Activated CD4-positive, alpha-beta T cell treated with anti-CD3 and anti-CD28 coated beads, Interleukin-2, amount 10 ng/mL, durations not matched to agents 24 days and 14 days (primary cell): ENCODE measurements at regions of chr3 and their contacts with region 1.

Region 1: DNA sequence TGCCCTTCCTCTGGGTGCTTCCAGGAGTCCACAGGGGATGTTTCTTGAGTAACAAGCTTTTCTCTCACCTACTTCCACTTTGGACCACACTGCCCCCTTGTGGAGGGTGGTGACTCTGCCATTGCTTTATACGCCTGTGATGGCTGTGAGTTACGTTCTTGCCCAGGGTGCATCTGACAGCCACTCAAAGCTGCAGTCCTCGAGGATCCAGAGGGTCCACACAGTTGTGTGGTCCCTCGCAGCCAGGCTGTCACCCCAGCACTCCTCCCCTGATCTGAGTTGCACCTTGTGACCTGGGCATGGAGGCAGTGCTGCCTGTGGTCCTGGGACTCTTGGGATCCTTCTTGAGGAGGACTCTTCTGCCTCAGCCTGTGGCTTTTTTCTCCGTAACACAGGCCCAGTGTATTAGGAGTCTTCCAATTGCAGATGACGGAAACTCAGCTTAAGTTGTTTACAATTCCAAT is 23.4 kb downstream of the FOXL2 start:
- DNase-seq: peak; percentile 95
- H3K4me3 Mint-ChIP-seq: no peak overlapping the region
- H3K27ac Mint-ChIP-seq: no peak overlapping the region
- H3K4me1 Mint-ChIP-seq: peaks cover 5% of the 10 kb centered on the region
- H3K27me3 Mint-ChIP-seq: peaks cover 17% of the 10 kb centered on the region

Region 2: GRCh38 chr3:138417559-138417982 is 506.0 kb before region 1 on chr3:
- intact Hi-C with region 1: loop called (anchors 1 kb)
- DNase-seq: peak; percentile 88
- H3K4me3 Mint-ChIP-seq: no peak overlapping the region
- H3K27ac Mint-ChIP-seq: no peak overlapping the region
- H3K4me1 Mint-ChIP-seq: peaks cover 2% of the 10 kb centered on the region
- H3K27me3 Mint-ChIP-seq: peaks cover 11% of the 10 kb centered on the region

Region 3: DNA sequence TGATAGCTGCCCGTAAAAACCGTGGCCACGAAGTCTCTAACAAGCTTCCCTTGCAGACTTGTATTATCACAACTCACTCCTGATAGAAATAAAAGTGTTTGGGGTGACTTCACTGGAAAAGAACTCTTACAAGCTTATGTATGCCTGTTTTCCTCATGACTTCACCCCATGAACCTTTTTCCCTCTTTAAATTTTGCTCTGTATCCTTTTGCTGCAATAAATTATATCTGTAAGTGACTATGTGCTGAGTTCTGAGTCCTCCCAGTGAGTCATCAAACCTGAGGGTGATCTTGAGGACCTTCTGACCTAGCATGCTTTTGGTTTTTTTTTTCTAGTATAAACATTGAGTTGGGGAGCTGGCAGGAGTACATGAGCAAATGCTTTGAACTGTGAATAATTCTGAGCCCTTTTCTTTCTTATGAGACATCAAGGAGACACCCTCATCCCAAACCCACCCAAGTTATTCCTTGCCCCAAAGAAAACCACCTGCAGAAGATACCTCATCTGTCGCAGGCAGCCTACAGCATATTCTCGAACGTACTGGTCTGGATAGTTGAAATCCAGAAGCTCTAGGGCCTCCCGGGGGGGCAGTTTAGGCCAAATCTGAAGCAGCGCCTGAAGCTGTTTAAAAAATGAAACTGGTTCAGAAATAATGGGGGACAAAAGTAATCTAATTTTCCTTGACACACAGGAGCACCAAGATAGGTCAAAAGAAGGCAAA is 229.1 kb before region 1 on chr3:
- intact Hi-C with region 1: loop called (anchors 1 kb)
- DNase-seq: no peak
- H3K4me3 Mint-ChIP-seq: no peak overlapping the region
- H3K27ac Mint-ChIP-seq: no peak overlapping the region
- H3K4me1 Mint-ChIP-seq: no peaks in the 10 kb centered on the region
- H3K27me3 Mint-ChIP-seq: no peaks in the 10 kb centered on the region

Region 4: DNA sequence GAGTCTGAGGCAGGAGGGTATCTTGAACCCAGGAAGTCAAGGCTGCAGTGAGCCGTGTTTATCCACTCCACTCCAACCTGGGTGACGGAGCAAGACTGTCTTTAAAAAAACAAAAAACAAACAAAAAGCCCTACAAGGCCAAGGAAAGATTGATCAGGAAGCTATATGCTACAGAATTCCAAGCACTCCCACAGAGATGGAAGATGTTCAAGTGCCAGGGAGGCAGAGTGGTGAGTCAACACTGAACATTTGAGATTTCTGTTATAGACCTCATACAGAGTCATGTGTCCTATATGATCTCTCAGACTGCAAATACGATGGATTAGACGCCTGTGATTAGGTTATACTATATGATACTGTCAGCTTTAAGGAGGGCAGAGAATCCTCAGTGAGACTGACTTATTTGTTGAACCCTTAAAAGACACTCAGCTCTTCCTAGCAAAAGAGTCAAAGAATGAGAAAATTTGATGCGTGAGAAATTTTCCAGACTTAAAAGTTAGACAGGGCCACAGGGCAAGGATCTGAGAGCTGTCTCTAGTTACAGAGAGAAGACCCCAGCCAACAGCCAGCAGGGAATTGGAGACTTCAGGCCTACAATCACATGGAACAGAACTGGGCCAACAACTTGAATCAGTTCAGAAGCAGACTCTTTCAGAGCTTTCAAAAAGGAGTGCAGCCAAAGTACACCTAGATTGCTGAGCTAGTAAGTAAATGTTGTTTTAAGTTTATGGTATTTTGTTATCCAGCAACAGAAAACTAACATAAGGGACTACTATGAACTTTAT is 196.4 kb before region 1 on chr3:
- intact Hi-C with region 1: no loop called
- DNase-seq: no peak
- H3K4me3 Mint-ChIP-seq: no peak overlapping the region
- H3K27ac Mint-ChIP-seq: no peak overlapping the region
- H3K4me1 Mint-ChIP-seq: peaks cover 18% of the 10 kb centered on the region
- H3K27me3 Mint-ChIP-seq: no peaks in the 10 kb centered on the region

Region 5: GRCh38 chr3:138862924-138863775 is 60.4 kb before region 1 on chr3:
- intact Hi-C with region 1: no loop called
- DNase-seq: no peak
- H3K4me3 Mint-ChIP-seq: no peak overlapping the region
- H3K27ac Mint-ChIP-seq: no peak overlapping the region
- H3K4me1 Mint-ChIP-seq: peaks cover 3% of the 10 kb centered on the region
- H3K27me3 Mint-ChIP-seq: no peaks in the 10 kb centered on the region